ENCODE measurements at regions of chr5 and their contacts with region 1.

Region 1: DNA sequence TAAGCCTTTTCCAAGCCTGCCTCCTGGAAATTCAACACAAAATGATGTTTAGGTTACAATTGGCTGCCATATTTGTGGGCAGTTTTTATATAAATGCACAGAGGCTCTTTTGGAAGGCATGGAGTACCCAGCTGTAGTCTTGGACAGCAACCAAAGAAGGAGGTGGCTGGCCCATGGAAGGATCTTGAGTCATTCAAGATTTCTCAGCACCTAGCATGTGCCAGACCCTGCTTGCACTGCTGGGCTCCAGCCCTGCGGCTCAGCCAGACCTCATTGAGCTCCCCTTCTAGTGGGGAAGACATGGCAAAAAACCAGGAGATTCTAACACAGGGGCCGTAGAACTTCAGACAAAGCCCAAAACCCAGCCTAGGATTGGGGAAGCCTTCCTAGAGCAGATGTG is 22.1 kb downstream of the JADE2 start:
- DNase-seq: no peak
- ATAC-seq: no peak
- H3K4me3 ChIP-seq: 0 out of 2 replicates have a peak overlapping the region, but pooled peaks have one; percentile 8
- H3K27ac ChIP-seq: peak overlapping the region; percentile 35
- H3K4me1 ChIP-seq: peaks cover 65% of the 10 kb centered on the region
- H3K27me3 ChIP-seq: no peaks in the 10 kb centered on the region
- CTCF ChIP-seq: no peak
- EP300 ChIP-seq: no peak
- POLR2A ChIP-seq: no peak
- RAD21 ChIP-seq: no peak

Region 2: GRCh38 chr5:134092878-134093277 is 454.7 kb before region 1 on chr5:
- CTCF ChIA-PET with region 1: no interaction called
- POLR2A ChIA-PET with region 1: no interaction called
- RAD21 ChIA-PET with region 1: no interaction called
- SMC1A ChIA-PET with region 1: no interaction called
- in situ Hi-C with region 1: no loop called
- intact Hi-C with region 1: no loop called
- DNase-seq: no peak
- ATAC-seq: no peak
- H3K4me3 ChIP-seq: no peak overlapping the region
- H3K27ac ChIP-seq: no peak overlapping the region
- H3K4me1 ChIP-seq: peaks cover 13% of the 10 kb centered on the region
- H3K27me3 ChIP-seq: no peaks in the 10 kb centered on the region
- CTCF ChIP-seq: no peak
- EP300 ChIP-seq: no peak
- POLR2A ChIP-seq: no peak
- RAD21 ChIP-seq: no peak

Region 3: DNA sequence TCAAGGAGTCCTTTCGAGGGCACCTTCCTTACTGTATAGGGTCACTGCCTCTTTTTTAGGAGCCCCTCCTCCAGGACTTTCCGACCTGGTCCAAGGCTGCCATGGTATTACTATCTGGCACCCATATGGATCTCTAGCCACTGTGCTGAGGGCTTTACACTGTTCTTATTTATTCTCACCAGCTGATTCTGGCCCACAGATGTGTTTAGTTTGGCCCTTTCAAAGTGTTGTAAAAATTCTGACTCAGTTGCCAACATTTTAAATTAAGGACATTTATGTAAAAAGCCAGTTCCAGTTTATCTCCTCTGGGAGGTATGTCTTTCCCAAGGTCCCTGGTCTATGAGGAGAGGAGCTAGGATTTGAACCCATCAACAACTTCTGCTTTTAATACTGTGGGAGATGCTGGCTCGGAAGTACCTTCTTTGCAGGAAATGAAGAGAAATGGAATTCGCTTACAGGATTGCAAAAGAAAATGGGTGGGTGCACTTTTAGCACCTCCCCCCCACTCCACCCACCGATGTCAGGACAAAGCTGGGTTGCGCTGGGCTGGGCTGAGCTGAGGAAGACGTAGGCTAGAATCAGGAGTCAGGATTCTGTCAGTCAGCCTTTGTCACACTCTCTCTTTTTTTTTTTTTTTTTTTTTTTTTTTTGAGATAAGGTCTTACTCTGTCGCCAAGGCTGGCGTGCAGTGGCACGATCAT is 14.3 kb before region 1 on chr5:
- CTCF ChIA-PET with region 1: interaction called, 145 read pairs
- POLR2A ChIA-PET with region 1: interaction called, 60 read pairs
- RAD21 ChIA-PET with region 1: interaction called, 144 read pairs
- SMC1A ChIA-PET with region 1: interaction called, 148 read pairs
- in situ Hi-C with region 1: no loop called
- intact Hi-C with region 1: no loop called
- DNase-seq: no peak
- ATAC-seq: no peak
- H3K4me3 ChIP-seq: no peak overlapping the region
- H3K27ac ChIP-seq: no peak overlapping the region
- H3K4me1 ChIP-seq: peaks cover 27% of the 10 kb centered on the region
- H3K27me3 ChIP-seq: no peaks in the 10 kb centered on the region
- CTCF ChIP-seq: no peak
- EP300 ChIP-seq: no peak
- POLR2A ChIP-seq: no peak
- RAD21 ChIP-seq: no peak

Region 4: GRCh38 chr5:134873987-134874830 is 326.6 kb after region 1 on chr5 and contains the start of gene TXNDC15:
- CTCF ChIA-PET with region 1: no interaction called
- POLR2A ChIA-PET with region 1: no interaction called
- RAD21 ChIA-PET with region 1: no interaction called
- SMC1A ChIA-PET with region 1: no interaction called
- in situ Hi-C with region 1: no loop called
- intact Hi-C with region 1: no loop called
- DNase-seq: peak; percentile 45
- ATAC-seq: peak; percentile 92
- H3K4me3 ChIP-seq: peak within 1 kb of the TSS; percentile 83
- H3K27ac ChIP-seq: peak within 1 kb of the TSS; percentile 88
- H3K4me1 ChIP-seq: peaks cover 18% of the 10 kb centered on the region
- H3K27me3 ChIP-seq: no peaks in the 10 kb centered on the region
- CTCF ChIP-seq: no peak
- EP300 ChIP-seq: no peak
- POLR2A ChIP-seq: peak; percentile 95
- RAD21 ChIP-seq: no peak
- polyA plus RNA-seq, gene TXNDC15: 8.1 to 17.9 TPM

Measured in GM12878 (cell line).